ENCODE measurements at regions of chr14 and their contacts with region 1.

Region 1: GRCh38 chr14:52068615-52069303 is at the start of gene NID2:
- DNase-seq: peak; percentile 87 to 93
- H3K4me3 ChIP-seq: peak within 1 kb of the TSS; percentile 68 to 78
- H3K27ac ChIP-seq: peak within 1 kb of the TSS; percentile 77 to 78
- H3K4me1 ChIP-seq: peaks cover 0 to 21% (median 7%) of the 10 kb centered on the region in 4 donors
- H3K27me3 ChIP-seq: no peaks in the 10 kb centered on the region
- CTCF ChIP-seq: no peak

Region 2: DNA sequence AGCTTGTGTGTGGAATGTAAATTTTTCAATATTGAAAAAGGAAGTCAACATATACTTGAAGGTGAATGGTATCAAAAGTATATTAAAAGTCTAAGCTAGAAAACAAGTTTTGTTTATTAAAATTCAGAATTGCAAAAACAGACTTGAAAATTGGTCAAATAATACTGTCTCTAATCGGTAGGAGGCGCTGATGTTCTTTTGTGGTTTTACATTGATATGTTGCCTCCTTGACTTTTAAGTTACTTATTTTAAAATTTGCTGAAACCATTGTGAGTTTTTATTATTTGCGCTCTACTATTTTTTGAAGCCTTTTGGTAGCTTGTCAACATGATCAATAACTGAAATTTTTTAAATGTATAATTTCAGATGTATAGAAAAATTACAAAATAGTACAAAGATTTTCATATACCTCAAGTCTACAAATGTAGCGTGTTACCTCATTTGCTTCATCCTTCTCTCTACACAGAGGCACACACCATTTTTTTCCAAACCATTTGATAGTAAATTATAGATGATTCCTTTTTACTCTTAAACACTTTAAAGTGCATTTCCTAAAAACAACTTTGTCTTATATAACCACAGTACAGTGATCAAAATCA is 72.5 kb before region 1 on chr14:
- intact Hi-C with region 1: loop called (anchors 2 kb)
- DNase-seq: no peak
- H3K4me3 ChIP-seq: no peak overlapping the region
- H3K27ac ChIP-seq: no peak overlapping the region
- H3K4me1 ChIP-seq: peaks cover 0 to 5% (median 1%) of the 10 kb centered on the region in 4 donors
- H3K27me3 ChIP-seq: no peaks in the 10 kb centered on the region
- CTCF ChIP-seq: peak; percentile 80 to 85

Region 3: GRCh38 chr14:52031781-52032180 is 37.0 kb before region 1 on chr14:
- intact Hi-C with region 1: loop called (anchors 5 kb)
- DNase-seq: peak; percentile 50 to 78
- H3K4me3 ChIP-seq: no peak overlapping the region
- H3K27ac ChIP-seq: peak overlapping the region; percentile 56 to 72
- H3K4me1 ChIP-seq: peaks cover 0 to 27% (median 13%) of the 10 kb centered on the region in 4 donors
- H3K27me3 ChIP-seq: no peaks in the 10 kb centered on the region
- CTCF ChIP-seq: no peak

Region 4: DNA sequence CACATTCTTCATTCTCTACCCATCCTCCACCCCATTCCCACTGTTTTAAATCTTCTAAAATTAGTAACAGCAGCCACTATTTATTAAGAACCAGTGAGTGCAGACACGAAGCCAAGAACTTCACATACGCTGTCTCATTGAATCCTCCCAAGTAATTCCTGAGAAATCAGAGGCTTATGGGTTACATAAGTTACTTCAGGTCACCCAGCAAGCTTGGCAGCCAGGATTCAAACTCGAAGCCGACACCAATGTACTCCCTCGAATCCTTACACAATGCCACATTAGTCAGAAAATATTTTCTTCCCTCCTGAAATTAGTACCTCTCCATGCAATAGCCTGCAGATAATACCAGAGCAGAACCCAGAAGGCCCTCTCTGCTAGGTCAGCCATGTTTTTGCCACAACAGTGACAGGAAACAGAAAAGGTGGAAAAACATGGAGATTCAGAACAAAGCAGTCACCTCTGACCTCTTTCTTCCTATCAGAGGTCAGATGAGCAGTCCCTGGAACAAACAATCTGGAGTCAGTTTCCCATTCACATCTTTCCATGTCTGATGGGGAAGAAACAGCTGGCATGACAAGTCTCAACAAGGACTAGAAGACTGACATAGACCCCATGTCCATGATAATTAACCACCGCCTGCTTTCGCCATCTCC is 16.3 kb before region 1 on chr14:
- intact Hi-C with region 1: no loop called
- DNase-seq: peak in 1 of 2 donors; percentile 44
- H3K4me3 ChIP-seq: no peak overlapping the region
- H3K27ac ChIP-seq: peak overlapping the region; percentile 30 to 47
- H3K4me1 ChIP-seq: peaks cover 0 to 65% (median 31%) of the 10 kb centered on the region in 4 donors
- H3K27me3 ChIP-seq: no peaks in the 10 kb centered on the region
- CTCF ChIP-seq: no peak

Region 5: GRCh38 chr14:52110441-52111086 is 41.8 kb after region 1 on chr14:
- intact Hi-C with region 1: no loop called
- DNase-seq: no peak
- H3K4me3 ChIP-seq: no peak overlapping the region
- H3K27ac ChIP-seq: no peak overlapping the region
- H3K4me1 ChIP-seq: no peaks in the 10 kb centered on the region
- H3K27me3 ChIP-seq: no peaks in the 10 kb centered on the region
- CTCF ChIP-seq: no peak

Region 6: GRCh38 chr14:52227619-52228222 is 159.0 kb after region 1 on chr14:
- intact Hi-C with region 1: no loop called
- DNase-seq: no peak
- H3K4me3 ChIP-seq: no peak overlapping the region
- H3K27ac ChIP-seq: no peak overlapping the region
- H3K4me1 ChIP-seq: no peaks in the 10 kb centered on the region
- H3K27me3 ChIP-seq: no peaks in the 10 kb centered on the region
- CTCF ChIP-seq: no peak